Activated CD8-positive, alpha-beta T cell treated with anti-CD3 and anti-CD28 coated beads for 36 hours (primary cell): ENCODE measurements at regions of chr2 and their contacts with region 1.

Region 1: GRCh38 chr2:68709421-68709911 is 25.1 kb upstream of the ARHGAP25 start:
- DNase-seq: peak; percentile 32
- ATAC-seq: peak; percentile 84
- H3K4me3 Mint-ChIP-seq: no peak overlapping the region
- H3K27ac Mint-ChIP-seq: peak overlapping the region; percentile 63
- H3K4me1 Mint-ChIP-seq: peaks cover 26% of the 10 kb centered on the region
- H3K27me3 Mint-ChIP-seq: peaks cover 2% of the 10 kb centered on the region
- CTCF ChIP-seq: peak; percentile 87

Region 2: GRCh38 chr2:68487773-68488355 is 221.6 kb before region 1 on chr2:
- CTCF ChIA-PET with region 1: interaction called, 11 read pairs
- POLR2A ChIA-PET with region 1: no interaction called
- intact Hi-C with region 1: no loop called
- DNase-seq: no peak
- ATAC-seq: peak; percentile 60
- H3K4me3 Mint-ChIP-seq: no peak overlapping the region
- H3K27ac Mint-ChIP-seq: no peak overlapping the region
- H3K4me1 Mint-ChIP-seq: peaks cover 5% of the 10 kb centered on the region
- H3K27me3 Mint-ChIP-seq: no peaks in the 10 kb centered on the region
- CTCF ChIP-seq: peak; percentile 72

Region 3: DNA sequence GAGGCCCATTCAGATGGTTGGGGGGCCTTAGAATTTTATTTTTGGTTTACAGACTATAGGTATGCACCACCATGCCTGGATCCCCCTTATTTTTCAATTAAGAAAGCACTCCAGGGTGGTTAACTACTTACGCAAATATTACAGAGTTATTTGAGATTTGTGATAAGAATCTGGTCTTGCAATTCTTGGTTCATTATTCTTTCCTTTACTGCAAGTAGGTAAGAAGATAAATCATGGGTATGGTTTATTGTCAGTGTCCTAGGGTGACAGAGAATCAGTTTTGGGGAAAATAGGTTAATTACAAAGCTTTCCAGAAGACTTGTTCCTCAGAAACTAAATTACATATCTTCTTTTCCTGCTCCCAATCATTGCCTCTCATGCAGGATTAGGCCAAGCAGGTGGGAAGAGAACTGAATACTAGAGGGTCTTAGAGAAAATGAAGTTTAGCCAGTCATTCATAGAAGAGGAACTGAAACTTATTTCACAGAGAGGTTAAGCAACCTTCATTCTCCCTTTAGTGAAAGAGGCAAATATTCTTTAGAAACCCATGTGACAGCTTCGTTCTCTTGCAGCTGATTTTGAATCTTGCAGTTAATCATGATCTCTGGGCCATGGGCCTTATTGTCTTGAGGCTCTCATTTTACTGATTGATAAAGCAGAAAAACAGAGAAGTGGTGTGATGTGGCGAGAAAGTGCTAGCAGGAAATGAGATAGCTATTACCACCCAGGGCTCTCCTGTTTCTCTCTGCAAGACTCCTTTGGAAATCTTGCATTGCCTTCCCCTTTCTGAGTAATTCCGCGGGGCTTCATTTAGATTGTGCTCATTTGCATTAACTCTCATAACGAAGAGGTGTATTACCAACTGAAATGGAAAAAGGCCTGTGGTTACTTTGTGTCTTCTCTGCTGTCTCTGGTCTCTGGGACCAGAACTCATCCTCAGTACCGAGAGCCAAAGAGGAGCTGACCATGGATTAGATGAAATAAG is 19.6 kb before region 1 on chr2:
- CTCF ChIA-PET with region 1: interaction called, 22 read pairs
- POLR2A ChIA-PET with region 1: interaction called, 4 read pairs
- intact Hi-C with region 1: no loop called
- DNase-seq: peak; percentile 37
- ATAC-seq: peak; percentile 84
- H3K4me3 Mint-ChIP-seq: peak overlapping the region; percentile 11
- H3K27ac Mint-ChIP-seq: peak overlapping the region; percentile 80
- H3K4me1 Mint-ChIP-seq: peaks cover 21% of the 10 kb centered on the region
- H3K27me3 Mint-ChIP-seq: peaks cover 6% of the 10 kb centered on the region
- CTCF ChIP-seq: no peak

Region 4: DNA sequence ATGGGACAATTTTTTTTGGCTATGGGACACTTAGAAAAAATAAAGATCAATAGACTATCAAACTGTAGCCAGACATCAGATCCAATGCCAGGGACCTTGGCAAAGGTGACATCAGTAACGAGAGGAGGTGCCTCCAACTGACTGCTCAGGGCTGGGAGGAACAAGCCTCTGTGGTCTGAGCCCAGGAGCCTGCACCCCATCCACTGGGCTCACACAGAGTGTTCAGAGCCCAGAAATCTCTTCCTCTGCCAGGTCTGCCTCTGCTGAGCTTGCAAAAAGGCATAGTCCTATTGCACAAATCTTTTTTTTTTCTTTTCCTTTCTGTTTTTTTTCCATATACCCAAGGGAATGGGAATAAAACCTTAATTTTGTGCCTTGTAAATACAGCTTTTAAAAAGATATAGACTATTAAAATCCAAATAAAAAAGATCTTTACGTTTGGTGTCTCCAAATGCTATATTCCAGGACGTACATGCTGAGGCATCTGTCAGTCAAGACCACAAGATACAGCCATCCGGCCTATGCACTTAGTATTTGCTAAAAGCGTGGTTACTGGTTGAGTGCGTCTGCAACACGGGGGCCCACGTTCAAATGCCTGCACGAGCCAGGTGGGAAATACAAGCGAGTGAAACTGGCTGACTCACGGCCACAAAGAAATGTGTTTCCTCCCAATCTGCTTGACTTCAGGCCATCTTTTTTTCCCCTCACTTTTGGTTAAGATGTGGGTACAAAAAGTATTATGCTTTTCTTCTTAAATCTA is 17.3 kb after region 1 on chr2:
- CTCF ChIA-PET with region 1: interaction called, 57 read pairs
- POLR2A ChIA-PET with region 1: no interaction called
- intact Hi-C with region 1: no loop called
- DNase-seq: peak; percentile 96
- ATAC-seq: peak; percentile 94
- H3K4me3 Mint-ChIP-seq: peak overlapping the region; percentile 35
- H3K27ac Mint-ChIP-seq: peak overlapping the region; percentile 81
- H3K4me1 Mint-ChIP-seq: peaks cover 58% of the 10 kb centered on the region
- H3K27me3 Mint-ChIP-seq: no peaks in the 10 kb centered on the region
- CTCF ChIP-seq: no peak

Region 5: GRCh38 chr2:68751397-68752339 is 42.2 kb after region 1 on chr2:
- CTCF ChIA-PET with region 1: interaction called, 31 read pairs
- POLR2A ChIA-PET with region 1: interaction called, 4 read pairs
- intact Hi-C with region 1: no loop called
- DNase-seq: peak; percentile 97
- ATAC-seq: peak; percentile 90
- H3K4me3 Mint-ChIP-seq: peak overlapping the region; percentile 30
- H3K27ac Mint-ChIP-seq: peak overlapping the region; percentile 86
- H3K4me1 Mint-ChIP-seq: peaks cover 80% of the 10 kb centered on the region
- H3K27me3 Mint-ChIP-seq: no peaks in the 10 kb centered on the region
- CTCF ChIP-seq: peak; percentile 94

Region 6: GRCh38 chr2:68909793-68910674 is 200.6 kb after region 1 on chr2:
- CTCF ChIA-PET with region 1: interaction called, 59 read pairs
- POLR2A ChIA-PET with region 1: no interaction called
- intact Hi-C with region 1: no loop called
- DNase-seq: peak; percentile 92
- ATAC-seq: peak; percentile 45
- H3K4me3 Mint-ChIP-seq: no peak overlapping the region
- H3K27ac Mint-ChIP-seq: peak overlapping the region; percentile 60
- H3K4me1 Mint-ChIP-seq: peaks cover 35% of the 10 kb centered on the region
- H3K27me3 Mint-ChIP-seq: no peaks in the 10 kb centered on the region
- CTCF ChIP-seq: peak; percentile 91